Thyroid gland (tissue), 4 donors: ENCODE measurements at regions of chr10 and their contacts with region 1.

Region 1: DNA sequence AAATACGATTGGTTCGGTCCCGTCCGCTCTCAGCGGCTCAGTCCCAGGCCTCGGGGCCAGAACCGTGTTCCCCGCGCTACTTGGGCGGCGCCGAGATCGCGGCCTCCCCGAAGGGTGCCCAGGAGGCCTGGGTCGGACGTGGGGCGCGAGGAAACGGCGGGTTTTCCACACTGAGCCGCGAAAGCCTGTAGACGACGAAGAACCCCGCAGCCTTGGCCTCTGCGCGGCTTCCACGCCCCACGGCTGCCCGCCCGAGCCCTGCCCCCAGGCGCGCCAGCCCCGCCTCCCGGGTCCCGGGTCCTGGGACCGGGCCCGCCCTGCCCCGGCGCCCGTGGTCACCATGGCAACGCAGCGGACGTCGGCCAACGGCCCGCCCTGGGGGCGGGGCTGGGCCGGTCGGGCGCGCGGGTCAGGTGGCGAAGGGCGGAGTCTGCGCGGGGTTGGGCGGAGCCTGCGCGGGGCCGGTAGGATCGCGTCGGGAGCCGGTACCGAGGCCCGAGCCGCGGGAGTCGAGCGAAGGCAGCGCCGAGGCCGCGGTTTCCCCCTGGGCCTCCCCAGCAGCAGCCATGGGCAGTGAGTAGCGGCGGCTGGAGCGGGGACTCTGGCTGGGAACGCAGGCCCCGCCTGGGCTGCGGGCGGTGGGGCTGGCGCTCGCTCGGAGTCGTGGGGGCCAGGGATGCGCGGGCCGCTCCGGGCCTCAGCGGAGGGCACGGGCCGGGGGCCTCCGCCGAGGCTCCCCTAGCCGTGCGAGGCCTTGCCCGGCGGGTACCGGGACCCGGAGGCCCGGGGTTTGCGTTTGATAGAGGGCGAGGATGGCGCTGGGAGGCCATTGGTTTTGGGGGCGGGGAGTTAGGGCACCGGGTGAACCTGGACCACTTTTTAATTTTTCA is at the start of gene SEC61A2:
- DNase-seq: peak; percentile 95 to 96
- H3K4me3 ChIP-seq: peak within 1 kb of the TSS; percentile 69 to 97 (median 94)
- H3K27ac ChIP-seq: peak within 1 kb of the TSS; percentile 95 to 96 (median 95)
- H3K4me1 ChIP-seq: peaks cover 10 to 15% of the 10 kb centered on the region in 2 donors
- H3K27me3 ChIP-seq: no peaks in the 10 kb centered on the region
- CTCF ChIP-seq: no peak
- POLR2A ChIP-seq: peak; percentile 79 to 91
- total RNA-seq, gene SEC61A2: 7.8 to 17.8 (median 13.3) TPM

Region 2: GRCh38 chr10:11949152-11949551 is 180.3 kb before region 1 on chr10:
- intact Hi-C with region 1: no loop called
- DNase-seq: no peak
- H3K4me3 ChIP-seq: no peak overlapping the region
- H3K27ac ChIP-seq: no peak overlapping the region
- H3K4me1 ChIP-seq: no peaks in the 10 kb centered on the region
- H3K27me3 ChIP-seq: no peaks in the 10 kb centered on the region
- CTCF ChIP-seq: no peak
- POLR2A ChIP-seq: no peak

Region 3: GRCh38 chr10:12048547-12048946 is 80.9 kb before region 1 on chr10:
- intact Hi-C with region 1: loop called (anchors 5 kb)
- DNase-seq: no peak
- H3K4me3 ChIP-seq: no peak overlapping the region
- H3K27ac ChIP-seq: no peak overlapping the region
- H3K4me1 ChIP-seq: peaks cover under 1 to 1% of the 10 kb centered on the region in 2 donors
- H3K27me3 ChIP-seq: no peaks in the 10 kb centered on the region
- CTCF ChIP-seq: no peak
- POLR2A ChIP-seq: no peak

Region 4: GRCh38 chr10:12068449-12069269 is 60.8 kb before region 1 on chr10 and contains the start of gene DHTKD1:
- intact Hi-C with region 1: loop called (anchors 5 kb)
- DNase-seq: peak; percentile 98 to 99
- H3K4me3 ChIP-seq: peak within 1 kb of the TSS; percentile 50 to 91 (median 59)
- H3K27ac ChIP-seq: peak within 1 kb of the TSS; percentile 29 to 79 (median 74)
- H3K4me1 ChIP-seq: peaks cover 6 to 9% of the 10 kb centered on the region in 2 donors
- H3K27me3 ChIP-seq: no peaks in the 10 kb centered on the region
- CTCF ChIP-seq: peak; percentile 24 to 61 (median 55)
- POLR2A ChIP-seq: peak; percentile 45 to 74
- total RNA-seq, gene DHTKD1: 29.1 to 80.2 (median 52.8) TPM